ENCODE measurements at regions of chr17 and their contacts with region 1.

Region 1: GRCh38 chr17:8727065-8727511 is 17.5 kb downstream of the CCDC42 start:
- DNase-seq: no peak
- H3K4me3 ChIP-seq: no peak overlapping the region
- H3K27ac ChIP-seq: no peak overlapping the region
- H3K4me1 ChIP-seq: peaks cover 2% of the 10 kb centered on the region
- H3K27me3 ChIP-seq: no peaks in the 10 kb centered on the region
- CTCF ChIP-seq: no peak
- EP300 ChIP-seq: no peak
- POLR2A ChIP-seq: no peak

Region 2: DNA sequence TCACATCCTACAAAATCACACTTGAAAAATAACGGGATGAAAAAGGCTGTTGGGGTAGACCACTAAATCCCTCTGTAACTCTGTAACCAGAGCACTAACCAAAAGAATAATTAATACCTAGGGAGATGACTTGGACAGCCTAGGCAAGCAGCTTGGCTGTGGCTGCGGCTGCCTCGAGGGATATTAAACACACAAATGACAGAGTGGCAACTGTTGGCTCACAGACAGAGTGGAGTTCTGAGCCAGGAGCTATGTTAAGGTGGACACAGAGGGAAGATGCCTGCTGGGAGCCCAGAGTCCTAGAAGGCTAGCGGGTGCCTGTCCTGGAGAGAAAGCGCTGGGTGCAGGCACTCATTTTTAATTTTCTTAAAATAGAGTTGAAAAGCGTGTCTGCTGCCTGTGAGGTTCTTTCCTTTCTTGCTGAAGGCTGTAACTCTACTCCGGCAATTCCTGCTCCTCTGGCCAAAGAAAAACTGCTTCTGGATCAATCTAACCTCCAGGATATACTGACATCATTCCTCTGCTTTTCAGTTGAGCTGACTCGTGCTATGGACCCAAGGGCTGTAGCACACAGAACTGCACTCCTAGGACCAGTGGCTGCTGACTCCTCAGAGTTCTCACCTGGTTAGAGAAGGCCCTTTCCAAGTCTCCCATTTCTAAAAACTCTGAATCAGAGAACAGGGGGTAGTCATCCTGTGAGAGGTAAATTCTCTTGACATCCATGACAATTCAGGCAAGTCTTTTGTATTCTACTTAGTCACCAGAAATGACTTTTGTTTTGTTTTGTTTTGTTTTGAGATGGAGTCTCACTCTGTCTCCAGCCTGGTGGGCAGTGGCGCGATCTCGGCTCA is 700.6 kb after region 1 on chr17:
- intact Hi-C with region 1: loop called in 1 of 4 experiments (anchors 5 kb)
- DNase-seq: no peak
- H3K4me3 ChIP-seq: no peak overlapping the region
- H3K27ac ChIP-seq: no peak overlapping the region
- H3K4me1 ChIP-seq: peaks cover 3% of the 10 kb centered on the region
- H3K27me3 ChIP-seq: no peaks in the 10 kb centered on the region
- CTCF ChIP-seq: no peak
- EP300 ChIP-seq: no peak
- POLR2A ChIP-seq: no peak